ENCODE measurements at regions of chr5 and their contacts with region 1.

Region 1: GRCh38 chr5:151825445-151825844 is 53.7 kb downstream of the G3BP1 start:
- DNase-seq: peak in 1 of 2 donors; percentile 69
- H3K4me3 ChIP-seq: no peak overlapping the region
- H3K27ac ChIP-seq: no peak overlapping the region
- H3K4me1 ChIP-seq: no peaks in the 10 kb centered on the region
- H3K27me3 ChIP-seq: no peaks in the 10 kb centered on the region
- CTCF ChIP-seq: peak; percentile 75 to 83 (median 77)

Region 2: DNA sequence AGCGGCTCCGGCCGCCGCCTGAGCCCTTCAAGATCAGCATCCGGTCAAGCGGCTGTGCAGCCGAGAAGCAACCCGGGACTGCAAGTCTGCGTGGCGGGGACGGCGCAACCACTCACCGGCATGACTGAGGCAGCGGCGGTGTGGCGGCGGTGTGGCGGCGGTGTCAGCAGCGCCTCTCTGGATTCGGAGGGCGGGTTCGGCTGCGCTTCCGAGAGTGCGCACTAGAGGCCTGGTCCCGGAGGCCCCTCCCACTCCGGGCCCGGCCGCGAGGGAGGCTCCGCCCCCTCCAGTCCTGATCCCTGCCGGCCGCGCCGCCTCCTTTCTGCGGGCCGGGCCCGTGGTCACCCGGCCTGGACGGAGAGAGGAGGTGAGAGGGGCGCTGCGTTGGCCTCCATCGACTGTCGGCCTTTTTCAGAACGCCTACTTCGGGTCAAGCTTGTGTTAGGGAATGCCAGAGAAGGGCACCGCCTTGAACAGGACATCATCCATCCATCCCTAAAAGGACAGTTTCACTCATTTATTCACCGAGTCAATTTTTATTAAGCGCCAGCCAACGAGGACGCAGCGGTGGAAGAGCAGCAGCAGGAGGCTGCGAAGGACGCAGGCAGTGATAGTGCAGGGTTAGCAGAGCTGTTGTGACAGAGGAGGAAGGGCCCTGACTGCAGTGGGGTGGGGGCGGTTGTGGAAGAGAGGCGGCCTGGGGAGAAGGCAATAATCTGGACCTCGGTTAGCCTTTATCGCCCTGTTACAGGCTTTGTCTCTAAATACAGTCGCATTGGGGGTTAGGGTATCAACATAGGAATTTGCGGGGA is 66.8 kb before region 1 on chr5 and contains the start of gene ATOX1:
- intact Hi-C with region 1: no loop called
- DNase-seq: peak; percentile 74 to 96
- H3K4me3 ChIP-seq: peak within 1 kb of the TSS; percentile 80 to 94
- H3K27ac ChIP-seq: peak within 1 kb of the TSS; percentile 81 to 85
- H3K4me1 ChIP-seq: peaks cover 9 to 14% of the 10 kb centered on the region in 2 donors
- H3K27me3 ChIP-seq: no peaks in the 10 kb centered on the region
- CTCF ChIP-seq: peak in 2 of 3 experiments; percentile 29 to 42
- total RNA-seq, gene ATOX1: 179 TPM

Region 3: DNA sequence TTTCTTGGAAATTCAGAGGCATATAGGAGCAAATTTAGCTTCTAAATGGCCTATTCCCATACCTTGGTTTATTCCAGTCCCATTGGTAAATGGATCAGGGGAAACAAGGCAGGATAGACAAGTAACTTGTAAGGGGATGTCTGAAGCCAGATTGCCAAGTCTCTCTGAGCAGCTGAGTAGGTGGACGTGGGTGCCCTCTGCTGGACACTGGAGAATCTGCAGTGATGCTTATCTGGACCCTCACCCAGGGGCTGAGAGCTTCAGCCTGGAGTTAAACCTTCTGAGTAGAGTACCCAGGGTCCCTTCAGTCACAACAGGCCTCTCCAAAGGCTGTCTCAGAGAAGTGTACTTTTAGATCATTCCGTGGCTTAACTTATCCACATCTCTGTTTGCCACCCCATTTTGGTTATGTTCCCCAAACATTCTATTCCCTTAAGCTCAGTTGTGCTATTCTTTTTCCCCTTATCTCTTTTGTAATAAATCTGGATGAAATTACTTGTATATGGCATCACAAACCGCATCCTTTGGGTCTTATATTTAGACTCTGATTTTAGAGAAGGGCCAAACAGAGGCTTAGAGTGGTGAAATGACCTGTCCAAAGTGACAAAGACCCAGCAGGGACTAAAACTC is 317.5 kb after region 1 on chr5:
- intact Hi-C with region 1: loop called (anchors 1 kb)
- DNase-seq: no peak
- H3K4me3 ChIP-seq: no peak overlapping the region
- H3K27ac ChIP-seq: no peak overlapping the region
- H3K4me1 ChIP-seq: no peaks in the 10 kb centered on the region
- H3K27me3 ChIP-seq: no peaks in the 10 kb centered on the region
- CTCF ChIP-seq: peak; percentile 52 to 87 (median 79)

Region 4: GRCh38 chr5:152271420-152271819 is 446.0 kb after region 1 on chr5:
- intact Hi-C with region 1: loop called (anchors 1 kb)
- DNase-seq: no peak
- H3K4me3 ChIP-seq: no peak overlapping the region
- H3K27ac ChIP-seq: no peak overlapping the region
- H3K4me1 ChIP-seq: peaks cover 0 to 14% of the 10 kb centered on the region in 2 donors
- H3K27me3 ChIP-seq: no peaks in the 10 kb centered on the region
- CTCF ChIP-seq: peak; percentile 38 to 63 (median 40)

Region 5: GRCh38 chr5:152349683-152350526 is 524.5 kb after region 1 on chr5:
- intact Hi-C with region 1: loop called (anchors 5 kb)
- DNase-seq: no peak
- H3K4me3 ChIP-seq: no peak overlapping the region
- H3K27ac ChIP-seq: no peak overlapping the region
- H3K4me1 ChIP-seq: no peaks in the 10 kb centered on the region
- H3K27me3 ChIP-seq: no peaks in the 10 kb centered on the region
- CTCF ChIP-seq: peak; percentile 36 to 77 (median 72)

Region 6: GRCh38 chr5:152505442-152506042 is 680.1 kb after region 1 on chr5:
- intact Hi-C with region 1: loop called (anchors 2 kb)
- DNase-seq: no peak
- H3K4me3 ChIP-seq: no peak overlapping the region
- H3K27ac ChIP-seq: no peak overlapping the region
- H3K4me1 ChIP-seq: no peaks in the 10 kb centered on the region
- H3K27me3 ChIP-seq: no peaks in the 10 kb centered on the region
- CTCF ChIP-seq: peak; percentile 19 to 59 (median 37)

Measured in ascending aorta (tissue), 2 donors.